ENCODE measurements at regions of chr9 and their contacts with region 1.

Region 1: DNA sequence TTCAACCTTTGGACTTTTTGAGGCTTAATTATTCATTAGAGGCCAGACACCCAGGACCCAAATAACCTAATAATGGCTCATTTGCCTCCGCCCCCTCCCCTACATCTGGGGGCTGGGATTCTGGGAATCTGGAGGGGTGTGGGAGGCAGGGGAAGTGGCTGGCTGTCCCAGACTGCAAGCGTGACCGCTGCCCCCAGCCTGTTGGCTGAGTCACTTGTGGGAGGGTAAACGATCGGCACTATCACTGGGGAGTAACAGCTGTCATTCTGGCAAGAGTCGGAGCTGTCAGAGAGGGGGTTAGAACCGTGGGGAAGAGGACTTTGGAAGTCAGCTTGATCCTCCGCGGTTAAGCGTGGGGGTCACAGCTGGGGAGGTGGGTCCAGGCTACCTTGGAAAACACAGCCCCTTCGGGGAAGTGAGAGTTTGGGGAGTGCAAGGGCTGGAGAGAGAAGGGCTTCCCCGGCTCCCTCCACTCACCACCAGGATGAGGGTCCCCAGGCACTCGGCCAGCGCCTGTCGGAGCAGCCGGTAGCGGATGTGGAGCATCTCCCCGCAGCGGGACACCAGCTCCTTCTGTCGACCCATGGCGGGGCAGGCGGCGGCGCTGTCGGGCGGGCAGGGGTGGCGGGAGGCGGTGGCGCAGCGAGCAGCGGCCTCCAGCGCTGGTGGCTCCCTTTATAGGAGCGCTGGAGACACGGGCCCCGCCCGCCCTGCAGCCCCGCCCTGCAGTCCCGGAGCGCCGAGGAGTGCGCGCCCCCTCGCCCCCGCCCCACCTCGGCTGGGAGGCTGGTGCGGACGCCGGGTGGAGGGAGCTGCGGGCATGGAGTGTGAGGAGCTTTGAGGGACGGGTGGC is at the start of gene AQP3:
- DNase-seq: peak; percentile 94
- H3K4me3 Mint-ChIP-seq: peak within 1 kb of the TSS; percentile 86
- H3K27ac Mint-ChIP-seq: peak within 1 kb of the TSS; percentile 91
- H3K4me1 Mint-ChIP-seq: peaks cover 50% of the 10 kb centered on the region
- H3K27me3 Mint-ChIP-seq: no peaks in the 10 kb centered on the region
- total RNA-seq, gene AQP3: 3.2 and 4.1 TPM in 2 replicates

Region 2: DNA sequence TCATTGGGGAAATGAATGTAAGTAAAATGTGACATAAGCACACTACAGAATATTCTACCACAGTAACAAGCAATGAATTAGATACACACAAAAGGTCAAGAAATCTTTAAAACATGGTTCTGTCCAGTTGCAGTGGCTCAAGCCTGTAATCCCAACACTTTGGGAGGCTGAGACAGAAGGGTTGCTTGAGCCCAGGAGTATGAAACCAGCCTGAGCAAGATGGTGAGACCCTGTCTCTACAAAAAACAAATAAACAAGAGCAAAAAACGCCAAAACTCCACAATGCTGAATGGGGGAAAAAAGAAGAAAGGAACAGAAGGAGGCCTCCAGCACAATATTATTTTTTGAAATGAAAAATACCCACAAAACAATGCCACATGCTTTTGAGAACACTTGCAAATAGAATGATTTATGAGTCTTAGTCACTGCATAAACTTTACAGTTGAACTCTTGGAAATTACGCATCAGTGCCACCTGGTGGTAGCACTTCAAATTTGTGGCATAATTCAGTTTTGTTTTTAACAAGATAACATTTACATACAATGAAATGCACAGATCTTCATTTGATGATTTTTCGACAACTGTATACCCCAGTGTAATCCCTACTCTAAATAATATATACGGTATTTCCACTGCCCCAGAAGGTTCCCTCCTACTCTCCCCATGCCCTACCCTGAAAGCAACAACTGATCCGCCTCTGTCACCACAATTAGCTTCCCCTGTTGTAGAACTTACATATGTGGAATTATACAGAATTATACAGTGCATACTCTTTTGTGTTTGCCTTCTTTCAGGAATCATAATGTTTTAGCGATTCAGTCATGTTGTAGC is 221.6 kb before region 1 on chr9:
- intact Hi-C with region 1: no loop called
- DNase-seq: peak; percentile 92
- H3K4me3 Mint-ChIP-seq: no peak overlapping the region
- H3K27ac Mint-ChIP-seq: peak overlapping the region; percentile 0
- H3K4me1 Mint-ChIP-seq: peaks cover 23% of the 10 kb centered on the region
- H3K27me3 Mint-ChIP-seq: peaks cover 3% of the 10 kb centered on the region

Region 3: GRCh38 chr9:33264473-33265177 is 182.5 kb before region 1 on chr9 and contains the starts of genes BAG1 and CHMP5:
- intact Hi-C with region 1: loop called (anchors 1 kb)
- DNase-seq: peak; percentile 100
- H3K4me3 Mint-ChIP-seq: peak within 1 kb of the TSS; percentile 97
- H3K27ac Mint-ChIP-seq: peak within 1 kb of the TSS; percentile 99
- H3K4me1 Mint-ChIP-seq: peaks cover 52% of the 10 kb centered on the region
- H3K27me3 Mint-ChIP-seq: no peaks in the 10 kb centered on the region
- total RNA-seq, gene BAG1: 72.4 and 73.6 TPM in 2 replicates
- total RNA-seq, gene CHMP5: 73.9 and 77.7 TPM in 2 replicates

Region 4: GRCh38 chr9:33366979-33367480 is 80.1 kb before region 1 on chr9:
- intact Hi-C with region 1: no loop called
- DNase-seq: no peak
- H3K4me3 Mint-ChIP-seq: no peak overlapping the region
- H3K27ac Mint-ChIP-seq: no peak overlapping the region
- H3K4me1 Mint-ChIP-seq: peaks cover 3% of the 10 kb centered on the region
- H3K27me3 Mint-ChIP-seq: no peaks in the 10 kb centered on the region

Region 5: DNA sequence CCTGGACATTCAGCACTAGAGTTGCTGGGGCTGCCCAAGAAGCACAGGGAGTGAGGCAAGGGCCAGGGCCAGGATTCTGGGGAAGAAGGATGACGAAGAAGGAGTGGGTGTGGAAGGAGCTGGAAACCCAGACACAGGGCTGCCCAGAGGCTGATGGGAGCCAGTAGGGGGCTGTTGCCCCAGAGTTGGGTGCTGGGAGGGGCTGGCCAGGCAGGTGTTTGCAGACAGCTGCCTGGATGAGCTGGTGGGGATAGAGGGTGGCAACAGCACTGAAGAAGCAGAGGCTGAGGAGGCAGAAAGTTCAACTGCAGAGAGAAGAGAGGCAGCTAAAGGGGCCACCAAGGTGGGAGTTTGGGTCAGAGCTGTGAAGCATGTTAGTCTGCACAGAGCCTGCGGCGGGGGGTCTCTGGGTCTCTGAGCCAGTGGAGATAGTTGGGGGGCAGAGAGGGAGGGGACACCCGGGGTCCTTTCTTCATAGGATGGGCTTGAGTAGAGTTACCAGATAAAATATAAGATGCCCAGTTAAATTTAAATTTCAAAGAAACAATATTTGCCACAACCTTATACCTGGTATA is 42.3 kb before region 1 on chr9:
- intact Hi-C with region 1: loop called (anchors 5 kb)
- DNase-seq: no peak
- H3K4me3 Mint-ChIP-seq: no peak overlapping the region
- H3K27ac Mint-ChIP-seq: no peak overlapping the region
- H3K4me1 Mint-ChIP-seq: peaks cover 5% of the 10 kb centered on the region
- H3K27me3 Mint-ChIP-seq: peaks cover 6% of the 10 kb centered on the region

Region 6: DNA sequence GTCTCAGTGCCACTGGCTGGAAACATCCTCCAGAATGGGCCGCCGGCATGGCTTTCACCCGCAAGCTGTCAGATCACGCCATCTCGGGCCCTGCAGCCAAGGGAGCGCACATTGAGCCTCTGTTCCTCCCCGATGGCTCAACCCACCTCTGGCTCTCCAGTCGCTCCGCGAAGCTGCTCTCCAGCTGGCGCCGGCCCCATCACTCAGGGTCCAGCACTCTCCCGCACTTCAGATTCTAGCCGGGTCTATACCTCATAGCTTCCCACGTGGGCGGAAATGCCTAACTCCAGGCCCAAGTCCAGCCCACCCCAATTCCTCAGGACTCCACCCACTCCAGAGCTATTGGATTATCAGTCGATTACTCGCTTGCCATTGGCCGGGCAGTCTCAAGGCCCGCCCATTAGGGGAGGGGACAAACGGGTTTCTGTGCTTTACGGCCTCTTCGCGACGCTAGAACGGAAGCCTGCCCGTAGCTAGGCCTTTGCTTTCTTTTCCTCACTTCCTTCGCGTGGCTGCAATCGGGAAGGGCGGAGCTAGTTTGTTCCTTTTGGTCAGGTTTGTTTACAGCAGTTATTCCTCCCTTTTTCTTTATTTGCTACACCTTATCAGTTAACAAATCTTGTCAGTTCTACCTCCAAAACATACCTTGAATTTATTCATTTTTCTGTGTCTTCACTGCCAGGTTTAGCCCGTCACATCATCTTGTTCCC is 26.6 kb after region 1 on chr9 and contains the start of gene NOL6:
- intact Hi-C with region 1: loop called (anchors 2 kb)
- DNase-seq: peak; percentile 100
- H3K4me3 Mint-ChIP-seq: peak within 1 kb of the TSS; percentile 95
- H3K27ac Mint-ChIP-seq: peak within 1 kb of the TSS; percentile 95
- H3K4me1 Mint-ChIP-seq: peaks cover 15% of the 10 kb centered on the region
- H3K27me3 Mint-ChIP-seq: no peaks in the 10 kb centered on the region
- total RNA-seq, gene NOL6: 86.7 and 86.8 TPM in 2 replicates

Region 7: DNA sequence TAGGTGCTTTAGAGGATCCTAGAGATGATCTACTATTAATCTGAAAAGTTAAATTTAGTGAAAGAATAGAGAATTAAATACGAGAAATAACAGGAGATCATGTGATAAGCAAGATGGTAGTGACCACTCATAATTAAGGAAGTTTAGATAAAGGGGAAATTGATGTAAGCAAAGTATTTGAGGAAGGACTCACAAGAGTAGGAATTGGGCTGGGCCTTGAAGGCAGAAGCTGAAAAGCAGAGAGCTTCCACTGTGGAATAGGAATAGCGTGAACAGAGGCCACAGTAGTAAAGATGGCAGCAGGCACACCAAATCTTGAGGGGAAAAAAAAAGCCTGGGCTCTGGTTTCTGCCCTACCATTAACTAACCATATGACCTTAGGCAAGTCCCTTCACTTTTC is 843.9 kb after region 1 on chr9:
- intact Hi-C with region 1: no loop called
- DNase-seq: no peak
- H3K4me3 Mint-ChIP-seq: no peak overlapping the region
- H3K27ac Mint-ChIP-seq: no peak overlapping the region
- H3K4me1 Mint-ChIP-seq: no peaks in the 10 kb centered on the region
- H3K27me3 Mint-ChIP-seq: no peaks in the 10 kb centered on the region